SK-N-SH (cell line): ENCODE measurements at regions of chr16 and their contacts with region 1.

Region 1: GRCh38 chr16:57416122-57416509 is 11.5 kb downstream of the CCL17 start:
- DNase-seq: no peak
- H3K4me3 ChIP-seq: no peak overlapping the region
- H3K27ac ChIP-seq: no peak overlapping the region
- H3K4me1 ChIP-seq: peaks cover 0 to 37% of the 10 kb centered on the region in 2 experiments; a peak in 2 of 4 replicates
- H3K27me3 ChIP-seq: no peaks in the 10 kb centered on the region
- CTCF ChIP-seq: no peak
- EP300 ChIP-seq: no peak
- RAD21 ChIP-seq: no peak

Region 2: GRCh38 chr16:57049678-57050077 is 366.4 kb before region 1 on chr16:
- CTCF ChIA-PET with region 1: no interaction called
- POLR2A ChIA-PET with region 1: no interaction called
- DNase-seq: no peak
- H3K4me3 ChIP-seq: no peak overlapping the region
- H3K27ac ChIP-seq: no peak overlapping the region
- H3K4me1 ChIP-seq: no peaks in the 10 kb centered on the region
- H3K27me3 ChIP-seq: no peaks in the 10 kb centered on the region
- CTCF ChIP-seq: no peak
- EP300 ChIP-seq: no peak
- RAD21 ChIP-seq: no peak

Region 3: DNA sequence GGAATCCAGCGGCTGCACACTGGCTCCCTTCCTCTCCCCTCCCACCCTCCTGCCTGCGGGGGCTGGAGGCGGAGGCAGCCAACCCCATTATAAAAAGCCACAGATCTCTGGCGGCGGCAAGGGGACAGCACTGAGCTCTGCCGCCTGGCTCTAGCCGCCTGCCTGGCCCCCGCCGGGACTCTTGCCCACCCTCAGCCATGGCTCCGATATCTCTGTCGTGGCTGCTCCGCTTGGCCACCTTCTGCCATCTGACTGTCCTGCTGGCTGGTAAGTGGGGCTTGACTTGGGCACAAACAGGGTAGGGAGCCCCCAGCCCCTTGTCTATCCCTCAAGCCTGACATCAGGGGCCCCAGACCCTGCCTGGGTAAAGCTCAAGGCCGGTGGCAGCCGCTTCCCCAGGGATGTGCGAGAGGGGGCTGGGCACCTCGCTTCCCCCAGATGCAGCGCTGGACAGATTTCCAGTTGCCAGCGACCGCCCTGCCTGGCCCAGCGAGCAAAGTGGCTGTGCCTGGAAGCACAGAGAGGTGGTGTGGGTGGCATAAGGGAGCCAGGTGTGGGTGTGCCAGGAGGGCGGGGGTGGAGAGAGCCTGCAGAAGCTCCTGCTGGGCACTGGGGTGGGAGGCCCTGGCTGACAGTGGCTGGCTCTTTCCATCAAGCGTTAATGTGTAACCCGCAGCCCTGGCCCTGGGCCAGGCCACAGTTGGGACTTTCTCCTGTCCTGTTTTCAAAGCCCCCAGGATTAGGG is 43.6 kb before region 1 on chr16 and contains the start of gene CX3CL1:
- CTCF ChIA-PET with region 1: interaction called, 97 read pairs
- POLR2A ChIA-PET with region 1: interaction called, 12 read pairs
- DNase-seq: peak; percentile 92
- H3K4me3 ChIP-seq: peak within 1 kb of the TSS; percentile 52 to 72
- H3K27ac ChIP-seq: peak within 1 kb of the TSS; percentile 57 to 96; a peak in 3 of 4 replicates
- H3K4me1 ChIP-seq: peaks cover 25 to 36% of the 10 kb centered on the region in 2 experiments; a peak in 3 of 4 replicates
- H3K27me3 ChIP-seq: no peaks in the 10 kb centered on the region
- CTCF ChIP-seq: peak; percentile 25; the same call in 1 of the 2 replicates
- EP300 ChIP-seq: peak in 1 of 2 experiments; percentile 64; a peak in 1 of 4 replicates
- RAD21 ChIP-seq: peak; percentile 38
- polyA plus RNA-seq, gene CX3CL1: 5.8 and 6.8 TPM in 2 replicates

Region 4: GRCh38 chr16:57403965-57404817 is 11.9 kb before region 1 on chr16 and contains the start of gene CCL17:
- CTCF ChIA-PET with region 1: interaction called, 15 read pairs
- POLR2A ChIA-PET with region 1: interaction called, 3 read pairs
- DNase-seq: no peak
- H3K4me3 ChIP-seq: no peak within 1 kb of the TSS
- H3K27ac ChIP-seq: no peak within 1 kb of the TSS
- H3K4me1 ChIP-seq: no peaks in the 10 kb centered on the region
- H3K27me3 ChIP-seq: no peaks in the 10 kb centered on the region
- CTCF ChIP-seq: no peak
- EP300 ChIP-seq: no peak
- RAD21 ChIP-seq: no peak
- polyA plus RNA-seq, gene CCL17: not detected in 2 replicates

Region 5: DNA sequence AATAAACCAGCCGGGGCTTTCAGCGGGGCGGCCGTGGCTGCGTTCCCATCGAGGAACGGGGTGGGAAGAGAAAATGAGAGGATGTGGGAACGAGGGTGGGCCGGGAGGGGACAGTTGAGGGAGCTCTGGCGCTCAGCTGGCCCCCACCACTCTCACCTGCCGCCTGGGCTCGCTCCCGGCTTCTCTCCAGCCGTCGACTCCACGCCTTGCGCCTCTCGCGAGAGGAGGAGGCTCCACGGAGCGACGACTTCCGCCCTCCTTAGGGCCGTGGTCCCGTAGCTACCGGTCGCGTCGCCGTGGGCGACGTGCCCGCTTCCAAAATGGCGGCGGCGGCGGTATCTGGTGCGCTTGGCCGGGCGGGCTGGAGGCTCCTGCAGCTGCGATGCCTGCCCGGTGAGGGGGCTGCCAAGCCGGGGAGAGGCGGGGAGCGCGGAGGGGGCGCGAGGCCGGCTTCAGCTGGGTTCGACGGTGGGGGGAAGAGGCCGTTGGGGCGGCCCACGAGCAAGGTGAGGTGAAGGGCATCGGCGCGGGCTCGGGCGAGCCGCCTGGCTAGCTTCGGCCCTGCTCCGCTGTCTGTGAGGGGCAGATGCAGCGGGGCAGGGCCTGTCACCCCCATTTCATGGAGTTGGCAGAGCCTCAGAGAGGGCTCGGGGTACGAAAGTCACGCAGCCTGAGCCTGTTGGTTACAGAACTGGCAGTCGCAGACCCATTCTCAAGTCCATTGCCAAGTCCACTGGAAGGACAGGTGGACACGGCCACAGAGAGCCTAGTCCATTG is 31.3 kb after region 1 on chr16 and contains the starts of genes CIAPIN1 and COQ9:
- CTCF ChIA-PET with region 1: interaction called, 21 read pairs
- POLR2A ChIA-PET with region 1: interaction called, 3 read pairs
- DNase-seq: peak; percentile 96
- H3K4me3 ChIP-seq: peak within 1 kb of the TSS; percentile 90 to 96
- H3K27ac ChIP-seq: peak within 1 kb of the TSS; percentile 65 to 84; a peak in 3 of 4 replicates
- H3K4me1 ChIP-seq: peaks cover 3 to 9% of the 10 kb centered on the region in 2 experiments; a peak in 2 of 4 replicates
- H3K27me3 ChIP-seq: no peaks in the 10 kb centered on the region
- CTCF ChIP-seq: no peak
- EP300 ChIP-seq: no peak
- RAD21 ChIP-seq: no peak
- polyA plus RNA-seq, gene CIAPIN1: 43.6 and 63.3 TPM in 2 replicates
- polyA plus RNA-seq, gene COQ9: 81.2 and 104 TPM in 2 replicates